Activated CD8-positive, alpha-beta T cell treated with anti-CD3 and anti-CD28 coated beads for 36 hours (primary cell): ENCODE measurements at regions of chr6 and their contacts with region 1.

Region 1: GRCh38 chr6:32718879-32719278 is 22.3 kb upstream of the HLA-DQA2 start:
- DNase-seq: no peak
- ATAC-seq: peak; percentile 42
- H3K4me3 Mint-ChIP-seq: no peak overlapping the region
- H3K27ac Mint-ChIP-seq: no peak overlapping the region
- H3K4me1 Mint-ChIP-seq: no peaks in the 10 kb centered on the region
- H3K27me3 Mint-ChIP-seq: peaks cover 19% of the 10 kb centered on the region
- CTCF ChIP-seq: no peak

Region 2: GRCh38 chr6:32796848-32797776 is 78.2 kb after region 1 on chr6:
- CTCF ChIA-PET with region 1: no interaction called
- POLR2A ChIA-PET with region 1: no interaction called
- intact Hi-C with region 1: loop called (anchors 10 kb)
- DNase-seq: peak; percentile 90
- ATAC-seq: peak; percentile 87
- H3K4me3 Mint-ChIP-seq: peak overlapping the region; percentile 64
- H3K27ac Mint-ChIP-seq: no peak overlapping the region
- H3K4me1 Mint-ChIP-seq: peaks cover 23% of the 10 kb centered on the region
- H3K27me3 Mint-ChIP-seq: peaks cover 41% of the 10 kb centered on the region
- CTCF ChIP-seq: peak; percentile 90

Region 3: DNA sequence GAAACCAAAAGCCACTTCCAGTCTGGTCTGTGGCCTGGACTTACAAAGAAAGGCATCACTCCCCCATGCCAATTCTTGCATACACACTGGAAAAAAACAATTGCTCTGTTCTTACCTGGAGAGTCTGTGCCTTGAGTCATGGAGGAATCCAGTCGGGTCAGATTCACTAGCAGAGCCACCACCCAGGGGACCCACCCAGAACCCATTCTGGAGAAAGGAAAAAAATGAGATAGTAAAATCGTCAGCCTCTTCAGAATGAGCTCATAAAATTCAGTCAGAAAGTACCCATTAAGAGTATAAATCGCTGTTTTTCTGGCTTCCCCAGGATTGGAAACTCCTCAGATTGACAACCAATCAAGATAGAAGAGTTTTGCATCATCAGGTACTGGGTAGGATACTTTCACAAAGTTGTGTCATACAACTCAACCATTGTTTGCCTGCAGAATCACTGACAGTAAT is 97.9 kb after region 1 on chr6 and contains the start of gene HLA-DOB:
- CTCF ChIA-PET with region 1: no interaction called
- POLR2A ChIA-PET with region 1: no interaction called
- intact Hi-C with region 1: no loop called
- DNase-seq: no peak
- ATAC-seq: peak; percentile 74
- H3K4me3 Mint-ChIP-seq: no peak within 1 kb of the TSS
- H3K27ac Mint-ChIP-seq: no peak within 1 kb of the TSS
- H3K4me1 Mint-ChIP-seq: peaks cover 14% of the 10 kb centered on the region
- H3K27me3 Mint-ChIP-seq: no peaks in the 10 kb centered on the region
- CTCF ChIP-seq: no peak
- total RNA-seq, gene HLA-DOB: 10.2 to 11.6 TPM

Region 4: GRCh38 chr6:32829495-32829894 is 110.6 kb after region 1 on chr6:
- CTCF ChIA-PET with region 1: no interaction called
- POLR2A ChIA-PET with region 1: no interaction called
- intact Hi-C with region 1: no loop called
- DNase-seq: no peak
- ATAC-seq: no peak
- H3K4me3 Mint-ChIP-seq: no peak overlapping the region
- H3K27ac Mint-ChIP-seq: no peak overlapping the region
- H3K4me1 Mint-ChIP-seq: peaks cover 65% of the 10 kb centered on the region
- H3K27me3 Mint-ChIP-seq: no peaks in the 10 kb centered on the region
- CTCF ChIP-seq: no peak